CD8-positive, alpha-beta T cell (primary cell): ENCODE measurements at regions of chr7 and their contacts with region 1.

Region 1: GRCh38 chr7:332646-333392 is 42.8 kb downstream of the FOXL3 start:
- DNase-seq: peak; percentile 76 to 98 (median 88)
- ATAC-seq: peak; percentile 92
- H3K4me3 ChIP-seq: peak overlapping the region; percentile 34 to 52
- H3K4me3 Mint-ChIP-seq: peak overlapping the region; percentile 22
- H3K27ac ChIP-seq: no peak overlapping the region
- H3K27ac Mint-ChIP-seq: no peak overlapping the region
- H3K4me1 ChIP-seq: peaks cover 18% of the 10 kb centered on the region
- H3K4me1 Mint-ChIP-seq: peaks cover 11% of the 10 kb centered on the region
- H3K27me3 ChIP-seq: no peaks in the 10 kb centered on the region
- H3K27me3 Mint-ChIP-seq: no peaks in the 10 kb centered on the region
- CTCF ChIP-seq: peak; percentile 69

Region 2: DNA sequence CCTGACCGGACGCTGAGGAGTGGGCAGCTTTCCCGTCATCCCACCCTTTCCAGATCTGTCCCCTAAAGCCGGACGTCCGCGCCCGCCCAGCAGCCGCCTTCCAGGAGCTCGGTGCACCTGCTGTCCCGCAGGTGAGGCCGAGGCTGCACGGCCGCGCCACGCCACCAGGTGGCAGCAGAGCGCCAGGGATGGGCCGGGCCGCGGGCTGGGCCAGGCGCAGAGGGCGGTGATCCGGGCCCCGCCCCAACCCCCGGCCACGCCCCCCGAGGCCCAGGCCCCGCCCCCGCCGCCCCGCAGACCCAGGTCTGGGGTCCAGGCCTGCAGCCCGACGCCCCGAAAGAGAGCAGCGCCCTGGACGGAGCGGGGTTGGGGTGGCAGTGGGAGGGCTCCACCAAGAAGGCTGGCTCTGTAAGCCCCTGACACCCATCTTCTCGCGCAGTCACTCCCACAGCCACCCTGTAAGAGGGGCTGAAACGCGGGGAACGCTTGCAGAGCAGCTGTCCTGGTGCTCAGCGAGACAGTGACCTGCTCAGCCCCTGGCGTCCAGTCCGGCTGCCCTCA is 10.6 kb before region 1 on chr7:
- CTCF ChIA-PET with region 1: interaction called, 22 read pairs
- POLR2A ChIA-PET with region 1: no interaction called
- intact Hi-C with region 1: no loop called
- DNase-seq: peak; percentile 73 to 94 (median 86)
- ATAC-seq: peak; percentile 100
- H3K4me3 ChIP-seq: no peak overlapping the region
- H3K4me3 Mint-ChIP-seq: no peak overlapping the region
- H3K27ac ChIP-seq: no peak overlapping the region
- H3K27ac Mint-ChIP-seq: no peak overlapping the region
- H3K4me1 ChIP-seq: peaks cover 4% of the 10 kb centered on the region
- H3K4me1 Mint-ChIP-seq: no peaks in the 10 kb centered on the region
- H3K27me3 ChIP-seq: no peaks in the 10 kb centered on the region
- H3K27me3 Mint-ChIP-seq: peaks cover 27% of the 10 kb centered on the region
- CTCF ChIP-seq: peak; percentile 82

Region 3: DNA sequence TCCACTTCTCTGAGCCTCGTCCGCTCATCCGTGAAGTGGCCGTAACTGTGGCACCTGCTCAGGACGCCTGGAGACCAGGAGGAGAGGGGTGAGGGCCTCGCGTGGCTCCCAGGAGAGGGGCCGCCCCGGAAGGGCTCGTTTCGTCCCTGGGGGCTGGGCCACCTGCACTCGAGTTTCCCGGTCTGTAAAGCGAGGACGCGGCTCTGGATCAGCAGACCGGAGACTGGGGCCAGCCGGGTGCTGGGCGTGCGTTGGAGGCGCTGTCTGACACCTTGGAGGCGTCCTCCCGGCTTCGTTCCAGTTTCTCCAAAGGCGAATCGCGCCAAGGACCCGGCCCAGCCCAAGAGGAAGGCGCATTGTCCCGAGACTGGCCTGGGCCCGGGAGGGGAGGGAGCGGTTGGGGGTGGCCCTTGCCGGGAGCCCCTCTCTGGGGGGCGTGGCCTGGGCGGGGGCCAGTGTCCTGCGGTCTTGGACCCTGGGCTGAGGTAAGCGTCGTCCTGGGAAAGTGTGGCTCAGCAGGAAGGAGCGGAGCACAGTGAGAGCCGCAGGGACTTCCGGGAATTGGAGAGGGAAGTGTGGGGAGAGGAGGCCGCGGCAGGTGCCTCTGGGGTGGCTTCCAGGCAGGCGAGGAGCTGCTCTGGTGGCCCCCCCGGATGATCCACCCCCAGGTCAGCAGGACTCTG is 46.8 kb after region 1 on chr7:
- CTCF ChIA-PET with region 1: no interaction called
- POLR2A ChIA-PET with region 1: no interaction called
- intact Hi-C with region 1: loop called in 1 of 2 experiments (anchors 10 kb)
- DNase-seq: peak in 1 of 9 experiments; percentile 49
- ATAC-seq: no peak
- H3K4me3 ChIP-seq: peak overlapping the region; percentile 18 to 31
- H3K4me3 Mint-ChIP-seq: peak overlapping the region; percentile 63
- H3K27ac ChIP-seq: no peak overlapping the region
- H3K27ac Mint-ChIP-seq: no peak overlapping the region
- H3K4me1 ChIP-seq: peaks cover 30% of the 10 kb centered on the region
- H3K4me1 Mint-ChIP-seq: peaks cover 25% of the 10 kb centered on the region
- H3K27me3 ChIP-seq: no peaks in the 10 kb centered on the region
- H3K27me3 Mint-ChIP-seq: no peaks in the 10 kb centered on the region
- CTCF ChIP-seq: no peak

Region 4: DNA sequence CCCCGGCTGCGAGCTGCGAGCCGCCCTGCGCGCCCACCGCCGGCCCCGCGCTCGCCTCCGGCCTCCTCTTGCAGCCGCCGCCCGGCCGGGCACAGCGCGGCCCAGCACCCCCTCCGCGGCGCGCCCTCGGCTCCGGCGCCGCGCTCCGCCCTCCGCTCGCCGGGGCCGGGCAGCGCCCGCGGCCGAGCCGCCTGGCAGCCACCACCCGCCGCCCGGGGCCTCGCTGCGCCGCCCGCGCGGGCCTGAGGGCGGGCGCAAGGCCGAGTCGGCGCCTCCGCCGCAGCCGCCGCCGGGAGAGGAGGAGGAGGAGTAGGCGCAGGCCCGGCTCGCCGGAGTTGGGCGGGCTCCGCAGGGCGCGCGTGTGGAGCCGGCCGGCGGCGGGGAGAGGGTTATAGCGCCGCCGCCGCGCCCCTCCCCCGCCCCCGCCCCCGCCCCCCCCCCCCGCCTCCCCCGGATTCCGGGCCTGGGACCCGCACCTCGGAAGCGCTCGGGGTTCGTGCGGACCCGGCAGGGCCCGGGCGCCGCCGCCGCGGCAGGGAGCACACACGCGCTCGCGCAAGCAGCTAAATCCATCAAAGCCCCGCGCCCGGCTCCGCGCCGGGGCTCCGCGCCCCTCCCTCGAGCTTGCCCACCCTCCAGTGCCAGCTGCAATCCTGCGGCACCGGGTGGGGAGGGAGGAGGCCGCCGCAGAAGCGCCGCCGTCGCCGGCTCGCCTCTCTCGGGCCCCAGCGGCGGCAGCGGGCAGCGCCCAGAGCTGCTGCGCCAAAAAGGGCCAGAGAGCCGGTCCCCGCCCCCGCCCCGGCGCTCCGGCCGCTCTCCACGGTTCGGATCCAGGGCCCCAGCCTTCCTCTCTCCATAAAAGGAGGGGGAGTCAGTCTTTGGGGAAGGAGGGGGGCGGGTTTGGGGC is 186.9 kb after region 1 on chr7 and contains the start of gene PDGFA:
- CTCF ChIA-PET with region 1: no interaction called
- POLR2A ChIA-PET with region 1: no interaction called
- intact Hi-C with region 1: no loop called
- DNase-seq: peak in 2 of 9 experiments; percentile 37 to 44
- ATAC-seq: peak; percentile 26
- H3K4me3 ChIP-seq: peak within 1 kb of the TSS in 1 of 2 experiments; percentile 30
- H3K4me3 Mint-ChIP-seq: peak within 1 kb of the TSS; percentile 79
- H3K27ac ChIP-seq: no peak within 1 kb of the TSS
- H3K27ac Mint-ChIP-seq: peak within 1 kb of the TSS; percentile 75
- H3K4me1 ChIP-seq: peaks cover 24% of the 10 kb centered on the region
- H3K4me1 Mint-ChIP-seq: peaks cover 20% of the 10 kb centered on the region
- H3K27me3 ChIP-seq: peaks cover 33 to 34% of the 10 kb centered on the region in 2 experiments
- H3K27me3 Mint-ChIP-seq: peaks cover 33% of the 10 kb centered on the region
- CTCF ChIP-seq: no peak
- total RNA-seq, gene PDGFA: 2.1 to 2.3 TPM

Region 5: GRCh38 chr7:584122-584465 is 251.3 kb after region 1 on chr7:
- CTCF ChIA-PET with region 1: interaction called, 3 read pairs
- POLR2A ChIA-PET with region 1: no interaction called
- intact Hi-C with region 1: loop called in 1 of 2 experiments (anchors 5 kb)
- DNase-seq: peak; percentile 79 to 97 (median 91)
- ATAC-seq: peak; percentile 97
- H3K4me3 ChIP-seq: peak overlapping the region; percentile 59 to 66
- H3K4me3 Mint-ChIP-seq: peak overlapping the region; percentile 90
- H3K27ac ChIP-seq: peak overlapping the region; percentile 74 to 75
- H3K27ac Mint-ChIP-seq: peak overlapping the region; percentile 99
- H3K4me1 ChIP-seq: peaks cover 21% of the 10 kb centered on the region
- H3K4me1 Mint-ChIP-seq: peaks cover 39% of the 10 kb centered on the region
- H3K27me3 ChIP-seq: no peaks in the 10 kb centered on the region
- H3K27me3 Mint-ChIP-seq: no peaks in the 10 kb centered on the region
- CTCF ChIP-seq: no peak

Region 6: GRCh38 chr7:732094-732541 is 399.3 kb after region 1 on chr7:
- CTCF ChIA-PET with region 1: interaction called, 5 read pairs
- POLR2A ChIA-PET with region 1: no interaction called
- intact Hi-C with region 1: loop called in 1 of 2 experiments (anchors 1 kb)
- DNase-seq: peak in 4 of 9 experiments; percentile 26 to 58 (median 42)
- ATAC-seq: no peak
- H3K4me3 ChIP-seq: no peak overlapping the region
- H3K4me3 Mint-ChIP-seq: no peak overlapping the region
- H3K27ac ChIP-seq: no peak overlapping the region
- H3K27ac Mint-ChIP-seq: no peak overlapping the region
- H3K4me1 ChIP-seq: peaks cover 5% of the 10 kb centered on the region
- H3K4me1 Mint-ChIP-seq: peaks cover 10% of the 10 kb centered on the region
- H3K27me3 ChIP-seq: no peaks in the 10 kb centered on the region
- H3K27me3 Mint-ChIP-seq: no peaks in the 10 kb centered on the region
- CTCF ChIP-seq: no peak